HepG2 (cell line): ENCODE measurements at regions of chr14 and their contacts with region 1.

Region 1: DNA sequence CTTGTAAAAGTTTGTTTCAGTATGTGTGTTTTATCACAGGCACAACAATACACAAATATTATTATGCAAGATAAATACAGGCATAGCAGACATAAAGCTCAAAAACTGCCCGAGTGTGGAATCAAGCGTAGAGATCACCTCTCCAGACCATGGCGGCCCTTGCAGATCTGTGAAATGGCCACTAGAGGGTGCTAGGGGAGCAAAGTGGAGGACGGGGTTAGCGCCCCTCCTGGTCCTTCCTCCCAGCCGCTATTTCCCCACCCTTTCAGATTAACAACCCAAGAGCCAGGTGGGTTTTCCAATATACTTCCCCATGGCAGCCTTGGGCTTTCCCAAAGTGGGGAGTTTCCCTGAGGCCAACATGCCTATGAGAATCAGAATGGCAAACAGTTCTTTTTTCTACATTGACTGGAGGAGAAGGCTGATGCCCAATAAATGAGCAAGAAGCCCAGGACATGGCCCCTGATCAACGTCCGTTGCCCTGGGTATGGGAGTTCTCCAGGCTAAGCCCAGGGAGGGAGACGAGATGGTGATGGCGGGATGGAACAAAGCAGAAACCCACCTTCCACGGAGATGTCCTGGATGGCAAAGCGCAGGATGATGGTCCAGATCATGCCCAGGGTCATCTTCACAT is 67.4 kb downstream of the ACTN1 start:
- DNase-seq: peak; percentile 74
- ATAC-seq: peak; percentile 95
- H3K4me3 ChIP-seq: no peak overlapping the region
- H3K27ac ChIP-seq: no peak overlapping the region
- H3K4me1 ChIP-seq: peaks cover 13% of the 10 kb centered on the region
- H3K27me3 ChIP-seq: no peaks in the 10 kb centered on the region
- CTCF ChIP-seq: peak; percentile 93
- EP300 ChIP-seq: no peak
- POLR2A ChIP-seq: no peak
- RAD21 ChIP-seq: peak; percentile 91

Region 2: DNA sequence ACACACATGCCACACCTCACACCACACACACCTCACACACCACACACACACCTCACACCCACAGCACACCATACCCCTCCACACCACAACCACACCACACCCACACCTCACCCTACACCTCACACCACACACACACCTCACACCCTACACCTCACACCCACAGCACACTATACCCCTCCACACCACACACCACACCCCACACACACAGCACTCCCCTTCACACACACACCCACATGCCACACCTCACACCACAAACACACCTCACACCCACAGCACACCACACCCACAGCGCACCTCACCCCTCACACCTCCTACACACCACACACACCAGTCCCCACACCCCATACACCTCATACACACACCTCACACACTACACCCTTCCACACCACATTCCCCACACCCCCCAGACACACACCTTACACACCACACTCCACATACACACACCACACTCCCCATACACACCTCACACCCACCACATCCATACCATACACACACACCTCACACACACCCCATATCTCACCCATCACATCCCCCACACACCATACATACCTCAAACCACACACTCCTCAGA is 12.6 kb before region 1 on chr14:
- CTCF ChIA-PET with region 1: no interaction called
- POLR2A ChIA-PET with region 1: no interaction called
- in situ Hi-C with region 1: no loop called
- intact Hi-C with region 1: no loop called
- DNase-seq: no peak
- ATAC-seq: no peak
- H3K4me3 ChIP-seq: no peak overlapping the region
- H3K27ac ChIP-seq: no peak overlapping the region
- H3K4me1 ChIP-seq: no peaks in the 10 kb centered on the region
- H3K27me3 ChIP-seq: no peaks in the 10 kb centered on the region
- CTCF ChIP-seq: no peak
- EP300 ChIP-seq: no peak
- POLR2A ChIP-seq: no peak
- RAD21 ChIP-seq: no peak

Region 3: DNA sequence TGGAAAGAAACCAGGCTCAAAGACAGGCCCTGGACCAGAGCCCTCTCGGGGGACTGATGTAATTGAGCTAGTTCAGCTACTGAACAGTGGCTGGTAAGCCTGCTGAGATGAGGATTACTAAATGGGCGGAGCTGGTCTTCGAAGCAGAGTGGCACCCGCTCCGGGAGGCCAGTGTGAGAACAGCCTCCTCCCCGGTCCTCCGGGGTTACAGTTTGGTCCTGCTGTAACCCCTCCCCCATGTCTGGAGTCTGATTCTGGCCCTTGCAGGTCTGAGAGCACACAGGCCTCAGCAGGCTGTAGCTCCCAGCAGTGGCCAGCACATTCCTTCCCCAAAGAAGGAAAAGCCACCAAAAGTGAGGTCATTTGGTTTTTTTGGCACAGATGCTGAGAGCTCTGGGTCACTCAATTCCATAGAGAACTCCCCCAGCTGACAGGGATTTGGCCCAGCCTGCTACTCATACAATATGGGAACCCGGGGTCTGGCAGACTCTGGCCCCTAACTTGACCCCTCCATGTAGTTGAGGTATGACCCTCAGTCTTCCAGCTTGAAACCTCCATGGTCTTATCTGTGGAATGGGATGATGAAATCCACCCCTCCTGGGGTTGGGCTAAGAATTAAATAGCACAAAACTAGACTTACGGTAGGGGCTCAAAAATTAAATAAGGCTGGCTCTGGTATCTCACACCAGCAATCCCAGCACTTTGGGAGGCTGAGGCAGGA is 28.3 kb after region 1 on chr14:
- CTCF ChIA-PET with region 1: interaction called, 13 read pairs
- POLR2A ChIA-PET with region 1: interaction called, 3 read pairs
- in situ Hi-C with region 1: no loop called
- intact Hi-C with region 1: loop called (anchors 1 kb)
- DNase-seq: peak; percentile 78
- ATAC-seq: peak; percentile 25
- H3K4me3 ChIP-seq: peak overlapping the region in 2 of 3 experiments; percentile 31 to 64; a peak in 3 of 6 replicates
- H3K27ac ChIP-seq: peak overlapping the region; percentile 78
- H3K4me1 ChIP-seq: peaks cover 93% of the 10 kb centered on the region
- H3K27me3 ChIP-seq: no peaks in the 10 kb centered on the region
- CTCF ChIP-seq: no peak
- EP300 ChIP-seq: peak in 1 of 2 experiments; percentile 20; a peak in 1 of 4 replicates
- POLR2A ChIP-seq: no peak
- RAD21 ChIP-seq: no peak

Region 4: DNA sequence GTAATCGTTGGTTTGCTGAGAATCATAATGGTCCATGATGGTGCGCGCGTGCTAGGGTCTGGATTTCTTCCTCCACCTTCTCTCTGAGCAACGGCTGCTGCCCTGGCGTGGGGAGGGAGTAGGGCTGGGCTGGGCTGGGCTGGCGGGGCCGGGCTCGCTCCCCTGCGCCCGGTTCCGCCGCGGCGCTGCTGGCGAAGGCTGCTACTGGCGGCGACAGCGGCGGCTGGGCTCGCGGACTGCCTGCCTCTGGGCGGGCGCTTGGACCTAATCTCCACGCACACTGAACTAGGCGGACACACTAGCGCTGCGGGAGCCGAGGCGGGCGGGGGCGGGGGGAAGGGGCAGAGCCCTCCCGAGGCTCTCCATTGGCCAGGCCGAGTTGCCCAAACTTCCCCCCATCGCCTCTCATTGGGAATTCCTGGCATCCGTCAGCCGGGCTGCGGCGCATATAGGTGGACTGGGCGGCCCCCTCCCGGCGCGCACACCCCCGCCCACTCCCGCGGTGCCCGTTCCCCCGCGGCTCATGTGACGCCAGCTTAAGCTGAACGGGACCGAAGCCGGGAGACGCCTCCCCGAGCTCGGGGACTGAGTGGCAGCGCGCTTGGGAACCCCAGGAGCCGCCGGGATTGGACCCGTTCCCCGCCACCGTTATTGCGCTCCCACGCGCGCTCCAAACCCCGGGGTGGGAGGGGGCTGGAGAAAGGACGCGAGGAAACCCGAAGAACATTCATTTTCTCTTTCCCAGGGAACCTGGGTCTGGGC is 67.5 kb after region 1 on chr14 and contains the start of gene ACTN1:
- CTCF ChIA-PET with region 1: interaction called, 3 read pairs
- POLR2A ChIA-PET with region 1: interaction called, 3 read pairs
- in situ Hi-C with region 1: no loop called
- intact Hi-C with region 1: loop called (anchors 5 kb)
- DNase-seq: peak; percentile 94
- ATAC-seq: peak; percentile 78
- H3K4me3 ChIP-seq: peak within 1 kb of the TSS; percentile 95 to 97 (median 95)
- H3K27ac ChIP-seq: peak within 1 kb of the TSS; percentile 90
- H3K4me1 ChIP-seq: peaks cover 68% of the 10 kb centered on the region
- H3K27me3 ChIP-seq: no peaks in the 10 kb centered on the region
- CTCF ChIP-seq: peak; percentile 25; the same call in 1 of the 2 replicates
- EP300 ChIP-seq: no peak
- POLR2A ChIP-seq: peak; percentile 72 to 85
- RAD21 ChIP-seq: peak; percentile 17; the same call in 1 of the 2 replicates
- total RNA-seq, gene ACTN1: 58.6 and 62.4 TPM in 2 replicates

Region 5: DNA sequence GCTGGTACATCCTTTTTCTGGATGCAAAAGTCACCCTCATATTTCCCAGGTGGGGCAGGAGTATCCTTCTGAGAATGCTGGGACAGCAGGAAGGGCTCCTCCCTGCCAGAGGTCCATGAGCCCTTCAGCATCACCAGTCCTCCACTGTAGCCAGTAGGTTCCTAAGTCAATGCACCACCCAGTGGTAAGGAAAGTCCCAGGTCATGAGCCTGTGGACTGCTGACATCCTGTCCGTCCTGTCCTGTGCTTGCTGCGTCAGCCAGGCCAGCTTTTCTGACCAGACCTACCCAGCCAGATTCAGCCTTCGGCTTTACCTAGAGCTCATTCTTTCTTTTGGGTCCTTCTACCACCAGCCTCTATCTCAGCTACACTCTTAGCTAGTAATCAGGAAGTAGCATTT is 90.4 kb after region 1 on chr14:
- CTCF ChIA-PET with region 1: interaction called, 17 read pairs
- POLR2A ChIA-PET with region 1: no interaction called
- in situ Hi-C with region 1: no loop called
- intact Hi-C with region 1: loop called (anchors 1 kb)
- DNase-seq: peak; percentile 73
- ATAC-seq: peak; percentile 99
- H3K4me3 ChIP-seq: no peak overlapping the region
- H3K27ac ChIP-seq: no peak overlapping the region
- H3K4me1 ChIP-seq: peaks cover 28% of the 10 kb centered on the region
- H3K27me3 ChIP-seq: peaks cover 0 to 26% of the 10 kb centered on the region in 2 experiments; a peak in 3 of 5 replicates
- CTCF ChIP-seq: peak; percentile 89
- EP300 ChIP-seq: no peak
- POLR2A ChIP-seq: no peak
- RAD21 ChIP-seq: peak; percentile 69; the same call in 1 of the 2 replicates

Region 6: GRCh38 chr14:69090187-69090789 is 178.6 kb after region 1 on chr14:
- CTCF ChIA-PET with region 1: interaction called, 15 read pairs
- POLR2A ChIA-PET with region 1: no interaction called
- in situ Hi-C with region 1: no loop called
- intact Hi-C with region 1: loop called (anchors 5 kb)
- DNase-seq: peak; percentile 33
- ATAC-seq: no peak
- H3K4me3 ChIP-seq: no peak overlapping the region
- H3K27ac ChIP-seq: no peak overlapping the region
- H3K4me1 ChIP-seq: peaks cover 26% of the 10 kb centered on the region
- H3K27me3 ChIP-seq: no peaks in the 10 kb centered on the region
- CTCF ChIP-seq: peak; percentile 68
- EP300 ChIP-seq: no peak
- POLR2A ChIP-seq: no peak
- RAD21 ChIP-seq: peak; percentile 22; the same call in 1 of the 2 replicates

Region 7: DNA sequence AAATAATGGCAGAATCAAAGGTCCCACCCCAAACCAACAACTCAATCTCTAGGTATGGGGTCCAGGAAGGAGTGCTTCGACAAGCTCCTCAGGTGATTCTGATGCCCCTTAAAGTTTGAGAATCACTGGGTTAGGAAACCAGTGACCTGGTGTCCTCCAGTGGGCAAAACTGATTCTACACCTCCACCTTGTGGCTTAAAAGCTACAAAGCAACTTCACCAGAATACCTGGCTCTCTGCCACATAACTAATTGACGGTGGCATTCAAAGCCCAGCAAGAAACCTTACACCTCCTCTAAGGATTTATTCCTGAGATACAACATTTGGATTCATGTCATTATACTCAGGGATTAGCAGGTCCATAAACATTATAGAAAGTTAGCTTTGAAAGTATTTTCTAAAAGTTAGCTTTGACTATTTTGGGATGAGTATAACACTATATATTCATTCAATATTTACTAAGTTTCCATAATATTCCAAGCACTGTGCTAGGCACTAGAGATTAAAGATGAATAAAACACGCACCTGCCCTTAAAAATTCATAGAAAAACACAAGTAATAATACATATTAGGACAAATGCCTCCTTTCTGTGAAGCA is 195.8 kb after region 1 on chr14:
- CTCF ChIA-PET with region 1: interaction called, 25 read pairs
- POLR2A ChIA-PET with region 1: no interaction called
- in situ Hi-C with region 1: no loop called
- intact Hi-C with region 1: loop called (anchors 1 kb)
- DNase-seq: peak; percentile 69
- ATAC-seq: peak; percentile 85
- H3K4me3 ChIP-seq: no peak overlapping the region
- H3K27ac ChIP-seq: no peak overlapping the region
- H3K4me1 ChIP-seq: no peaks in the 10 kb centered on the region
- H3K27me3 ChIP-seq: no peaks in the 10 kb centered on the region
- CTCF ChIP-seq: peak; percentile 87
- EP300 ChIP-seq: no peak
- POLR2A ChIP-seq: no peak
- RAD21 ChIP-seq: peak; percentile 87